ENCODE measurements at regions of chr5 and their contacts with region 1.

Region 1: GRCh38 chr5:61331407-61332357 is at the start of gene ZSWIM6:
- DNase-seq: peak; percentile 100
- ATAC-seq: peak; percentile 92 to 93
- total RNA-seq, gene ZSWIM6: 6.8 to 7.8 TPM

Region 2: GRCh38 chr5:61132559-61132958 is 199.1 kb before region 1 on chr5:
- intact Hi-C with region 1: no loop called
- DNase-seq: no peak
- ATAC-seq: no peak

Region 3: GRCh38 chr5:61162010-61162831 is 169.5 kb before region 1 on chr5 and contains the start of gene SMIM15:
- intact Hi-C with region 1: loop called (anchors 2 to 5 kb)
- DNase-seq: peak; percentile 93
- ATAC-seq: peak; percentile 98 to 99
- total RNA-seq, gene SMIM15: 26.0 to 32.2 TPM

Region 4: DNA sequence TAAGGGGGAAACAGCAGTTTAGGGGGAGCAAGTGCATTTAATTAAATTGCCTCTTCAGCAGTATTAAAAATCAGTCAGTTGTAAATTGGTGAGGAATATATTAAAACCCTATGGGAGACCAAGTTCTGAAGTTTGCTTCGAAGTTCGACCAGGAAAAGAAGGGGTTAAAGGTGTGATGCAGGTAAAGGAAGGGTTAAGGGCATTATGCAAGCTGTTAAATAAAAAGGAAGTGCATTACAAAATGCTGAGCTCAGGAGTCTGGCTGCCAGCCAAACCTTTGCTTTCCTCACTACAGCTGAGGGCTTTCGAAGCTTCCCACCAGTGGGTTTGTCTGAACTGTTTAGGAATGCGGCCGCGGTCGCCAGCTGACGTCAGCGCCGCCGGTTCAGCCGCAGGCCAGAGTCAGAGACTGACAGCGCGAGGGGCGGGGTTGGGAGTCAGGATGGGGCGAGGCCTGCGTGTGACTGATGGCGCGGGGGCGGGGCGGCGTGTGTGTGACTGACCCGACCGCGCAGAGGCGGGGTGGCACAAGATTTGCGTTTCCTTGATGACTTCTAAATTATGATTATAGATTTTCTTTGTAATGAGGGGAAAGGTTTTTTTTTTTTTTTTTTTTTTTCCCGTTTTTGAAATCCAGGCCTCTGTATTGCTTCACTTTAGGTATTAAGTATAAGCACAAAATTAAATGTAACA is 76.9 kb after region 1 on chr5:
- intact Hi-C with region 1: loop called (anchors 5 to 10 kb)
- DNase-seq: peak; percentile 100
- ATAC-seq: peak; percentile 100

Region 5: DNA sequence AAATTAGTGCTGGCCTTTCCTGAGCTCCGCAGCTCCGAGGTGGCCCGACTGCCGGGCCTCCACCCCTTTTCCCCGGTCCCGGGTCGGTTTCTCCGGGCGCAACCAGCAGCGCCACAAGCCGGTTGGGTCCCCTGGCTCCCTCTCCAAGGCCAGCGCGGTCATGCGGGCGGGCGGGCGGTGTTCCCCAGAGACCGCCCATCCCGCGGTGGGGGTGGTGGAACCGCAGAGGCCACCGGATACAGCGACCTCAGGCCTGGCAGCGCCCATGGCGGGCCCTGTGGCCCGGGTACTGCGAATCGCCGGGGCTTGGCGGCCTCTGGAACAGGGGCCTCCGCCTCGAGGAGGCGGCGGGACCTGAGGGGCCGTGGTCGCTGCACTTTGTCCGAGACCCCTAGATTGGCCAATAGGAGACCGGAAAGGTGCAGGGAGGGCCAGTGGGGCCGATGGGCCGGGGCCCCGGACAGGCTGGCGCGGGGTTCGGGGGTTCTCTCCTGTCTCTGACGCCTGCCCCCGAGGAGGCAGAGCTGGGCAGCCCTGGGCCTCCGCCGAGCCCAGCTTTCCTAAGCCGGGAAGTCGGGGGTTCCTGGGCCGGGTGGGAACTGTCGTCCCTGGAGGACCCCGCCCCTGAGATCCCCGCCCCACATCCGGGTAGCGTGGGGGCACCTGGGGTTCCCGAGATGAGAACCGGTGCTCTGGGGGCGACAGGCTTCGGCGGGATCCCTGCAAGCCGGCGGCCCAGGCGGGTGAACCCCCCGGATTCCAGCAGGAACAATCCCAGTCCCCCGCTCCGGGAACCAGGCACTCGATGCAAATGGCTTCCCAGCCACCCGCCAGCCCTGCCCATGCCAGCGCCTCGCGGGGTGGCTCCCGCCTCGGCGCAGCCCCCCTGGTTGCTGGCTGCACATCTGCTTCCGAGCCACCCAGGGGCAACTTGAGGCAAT is 294.3 kb after region 1 on chr5:
- intact Hi-C with region 1: loop called in 1 of 2 experiments (anchors 10 kb)
- DNase-seq: peak; percentile 84
- ATAC-seq: peak; percentile 96 to 97

Region 6: DNA sequence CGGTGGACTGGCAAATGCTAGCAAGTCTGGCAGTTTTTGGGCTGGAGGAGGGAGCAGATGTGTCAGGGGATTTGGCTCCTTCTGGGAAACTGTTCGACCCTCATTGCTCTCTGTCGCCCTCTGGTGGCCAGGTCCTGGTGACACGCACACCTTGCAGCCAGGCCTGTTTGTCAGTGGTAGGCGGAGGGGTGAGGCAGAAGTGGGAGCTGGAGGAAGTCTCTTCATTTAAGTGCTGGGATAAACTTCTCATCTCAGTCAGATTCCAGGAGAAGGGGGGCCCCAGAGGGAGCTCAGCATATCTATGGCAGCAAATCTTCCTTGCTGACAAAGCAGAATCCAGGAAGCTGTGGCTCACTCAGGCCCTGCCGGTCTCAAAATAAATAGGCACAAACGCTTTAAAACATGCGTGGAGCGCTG is 326.9 kb after region 1 on chr5:
- intact Hi-C with region 1: loop called (anchors 5 to 10 kb)
- DNase-seq: peak; percentile 85
- ATAC-seq: peak; percentile 89 to 92

Region 7: GRCh38 chr5:61666064-61666621 is 334.5 kb after region 1 on chr5:
- intact Hi-C with region 1: loop called in 1 of 2 experiments (anchors 10 kb)
- DNase-seq: no peak
- ATAC-seq: peak; percentile 42 to 49

Measured in left cardiac atrium (tissue), 4 donors.